A549 (cell line): ENCODE measurements at regions of chr2 and their contacts with region 1.

Region 1: GRCh38 chr2:31675485-31675901 is 94.8 kb upstream of the SRD5A2 start:
- DNase-seq: peak in 1 of 2 experiments; percentile 55
- ATAC-seq: peak; percentile 96 to 97
- H3K4me3 ChIP-seq: no peak overlapping the region
- H3K27ac ChIP-seq: no peak overlapping the region
- H3K4me1 ChIP-seq: no peaks in the 10 kb centered on the region
- CTCF ChIP-seq: peak; percentile 48
- EP300 ChIP-seq: no peak
- POLR2A ChIP-seq: no peak
- RAD21 ChIP-seq: peak; percentile 63 to 64

Region 2: GRCh38 chr2:31457651-31458050 is 217.8 kb before region 1 on chr2:
- CTCF ChIA-PET with region 1: no interaction called
- POLR2A ChIA-PET with region 1: no interaction called
- DNase-seq: no peak
- ATAC-seq: no peak
- H3K4me3 ChIP-seq: no peak overlapping the region
- H3K27ac ChIP-seq: no peak overlapping the region
- H3K4me1 ChIP-seq: no peaks in the 10 kb centered on the region
- CTCF ChIP-seq: no peak
- EP300 ChIP-seq: no peak
- POLR2A ChIP-seq: no peak
- RAD21 ChIP-seq: no peak

Region 3: DNA sequence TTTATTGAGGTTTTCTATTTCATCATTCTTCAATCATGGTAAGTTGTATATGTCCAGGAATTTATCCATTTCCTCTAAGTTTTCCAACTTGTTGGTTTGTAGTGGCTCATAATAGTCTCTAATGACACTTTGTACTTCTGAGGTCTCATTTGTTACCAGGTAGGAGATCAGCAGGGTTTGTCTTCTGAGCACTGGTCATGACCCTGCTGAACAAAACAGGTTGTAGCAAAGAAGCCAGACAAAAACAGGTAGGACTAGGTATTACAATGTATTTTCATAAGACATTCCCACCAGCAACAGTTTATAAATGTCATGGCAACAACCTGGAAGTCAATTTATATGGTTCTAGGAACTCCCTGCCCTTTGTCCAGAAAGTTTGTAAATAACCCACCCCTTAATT is 38.3 kb before region 1 on chr2:
- CTCF ChIA-PET with region 1: no interaction called
- POLR2A ChIA-PET with region 1: no interaction called
- DNase-seq: no peak
- ATAC-seq: no peak
- H3K4me3 ChIP-seq: no peak overlapping the region
- H3K27ac ChIP-seq: no peak overlapping the region
- H3K4me1 ChIP-seq: peaks cover 6% of the 10 kb centered on the region
- CTCF ChIP-seq: no peak
- EP300 ChIP-seq: no peak
- POLR2A ChIP-seq: no peak
- RAD21 ChIP-seq: no peak

Region 4: DNA sequence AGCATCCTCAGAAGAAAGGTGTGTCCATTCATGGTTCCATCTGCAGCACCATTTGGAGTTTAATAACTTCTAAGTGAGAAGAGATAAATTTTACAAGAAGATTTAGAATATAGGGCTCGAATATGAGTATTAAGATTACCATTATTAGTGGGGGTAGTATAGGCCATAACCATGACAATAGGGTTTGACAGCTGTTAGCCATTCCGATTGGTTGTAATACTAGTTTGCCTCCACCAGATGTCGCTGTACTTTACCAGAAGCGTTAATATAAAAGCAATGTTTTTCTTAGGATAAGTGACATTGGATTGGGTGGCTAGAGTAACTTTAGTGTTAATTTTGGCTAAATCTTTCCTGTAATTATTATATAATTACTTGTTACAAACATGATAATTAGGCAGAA is 12.8 kb after region 1 on chr2:
- CTCF ChIA-PET with region 1: interaction called, 10 read pairs
- POLR2A ChIA-PET with region 1: no interaction called
- DNase-seq: peak in 1 of 2 experiments; percentile 46
- ATAC-seq: 0 out of 6 replicates have a peak, but pooled peaks of 1 of the 2 experiments have one; percentile 36
- H3K4me3 ChIP-seq: no peak overlapping the region
- H3K27ac ChIP-seq: no peak overlapping the region
- H3K4me1 ChIP-seq: no peaks in the 10 kb centered on the region
- CTCF ChIP-seq: peak; percentile 62
- EP300 ChIP-seq: no peak
- POLR2A ChIP-seq: no peak
- RAD21 ChIP-seq: peak; percentile 37 to 46